Endothelial cell of umbilical vein (primary cell): ENCODE measurements at regions of chr6 and their contacts with region 1.

Region 1: GRCh38 chr6:111552241-111552744 is 53.4 kb downstream of the TRAF3IP2 start:
- DNase-seq: peak; percentile 89
- H3K4me3 ChIP-seq: no peak overlapping the region
- H3K27ac ChIP-seq: peak overlapping the region; percentile 30
- H3K4me1 ChIP-seq: peaks cover 20% of the 10 kb centered on the region
- H3K27me3 ChIP-seq: no peaks in the 10 kb centered on the region
- CTCF ChIP-seq: no peak
- POLR2A ChIP-seq: no peak

Region 2: GRCh38 chr6:111534231-111534751 is 18.0 kb before region 1 on chr6:
- CTCF ChIA-PET with region 1: interaction called, 4 read pairs
- POLR2A ChIA-PET with region 1: no interaction called
- dilution Hi-C with region 1: no loop called
- intact Hi-C with region 1: loop called (anchors 1 kb)
- DNase-seq: peak; percentile 93
- H3K4me3 ChIP-seq: no peak overlapping the region
- H3K27ac ChIP-seq: no peak overlapping the region
- H3K4me1 ChIP-seq: peaks cover 15% of the 10 kb centered on the region
- H3K27me3 ChIP-seq: no peaks in the 10 kb centered on the region
- CTCF ChIP-seq: no peak
- POLR2A ChIP-seq: no peak